Left colon (tissue), 2 donors: ENCODE measurements at regions of chr13 and their contacts with region 1.

Region 1: DNA sequence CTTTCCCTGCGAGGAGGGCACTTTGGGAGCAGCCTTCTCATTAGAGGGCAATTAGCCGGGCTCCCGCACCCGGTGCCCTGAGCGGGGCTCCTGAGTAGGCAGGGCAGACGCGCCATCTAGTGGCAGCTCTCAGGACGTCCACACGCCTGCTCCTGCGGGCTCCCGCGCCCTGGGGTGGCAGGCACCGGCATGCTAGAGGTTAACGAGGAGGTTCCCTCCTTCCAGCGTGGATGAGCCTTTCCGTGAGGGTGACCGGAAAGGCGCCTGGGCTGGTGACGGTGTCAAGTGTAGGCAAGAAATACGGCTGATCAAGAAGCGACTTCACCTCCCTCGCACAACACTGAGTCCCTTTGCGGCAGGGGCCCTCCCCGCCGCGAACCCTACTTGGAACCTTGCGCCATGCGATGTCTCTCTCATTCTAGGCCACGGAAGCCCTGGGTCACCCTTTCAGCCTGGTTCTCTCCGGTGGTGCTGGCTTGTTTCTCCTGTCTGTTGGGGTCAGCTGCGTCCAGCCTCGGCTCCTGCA is 67.7 kb downstream of the ALOX5AP start:
- DNase-seq: peak; percentile 83 to 91
- ATAC-seq: peak; percentile 97

Region 2: GRCh38 chr13:30132623-30133553 is 670.1 kb before region 1 on chr13:
- intact Hi-C with region 1: loop called in 1 of 2 experiments (anchors 10 kb)
- DNase-seq: peak; percentile 96 to 99
- ATAC-seq: peak; percentile 88

Region 3: DNA sequence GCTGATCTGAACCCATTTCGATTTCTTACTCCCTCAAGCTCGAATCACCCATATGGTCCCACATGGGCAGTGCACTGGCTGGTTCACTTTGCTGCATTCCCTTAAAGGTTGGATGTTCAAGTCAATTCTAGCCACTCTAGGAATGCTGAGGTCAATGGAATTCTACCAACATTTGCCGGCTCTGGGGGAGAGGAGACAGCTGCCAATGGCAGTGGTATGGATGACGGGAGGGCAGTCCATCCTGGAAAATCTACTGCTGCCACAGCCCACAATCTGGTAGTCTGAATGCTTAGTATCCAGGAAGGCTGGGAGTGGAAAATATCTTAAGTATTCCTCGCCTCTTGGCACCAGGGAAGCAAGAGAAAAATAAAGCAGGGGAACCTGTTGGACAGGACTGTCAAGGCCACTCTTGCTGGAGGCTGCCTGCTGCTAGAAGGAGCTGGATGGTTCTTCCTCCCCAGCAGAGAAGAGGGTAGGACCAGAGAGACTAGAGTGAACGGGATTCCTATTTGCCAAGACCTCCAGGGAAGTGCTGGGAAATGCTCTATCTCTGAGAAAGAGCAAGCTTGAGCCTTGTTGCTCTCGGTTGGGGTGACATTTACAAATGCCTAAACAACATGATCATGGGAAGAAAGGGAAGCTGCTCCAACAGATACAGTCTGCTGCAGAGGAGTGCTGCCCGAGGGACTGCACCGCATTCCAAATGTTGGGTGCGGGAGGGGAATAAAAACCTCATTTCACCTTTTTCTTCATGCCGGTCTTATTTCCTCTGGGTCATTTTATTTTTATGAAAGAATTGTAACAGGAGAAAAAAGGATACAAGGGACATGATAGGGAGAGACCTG is 316.6 kb before region 1 on chr13:
- intact Hi-C with region 1: loop called in 1 of 2 experiments (anchors 10 kb)
- DNase-seq: no peak
- ATAC-seq: peak; percentile 68

Region 4: DNA sequence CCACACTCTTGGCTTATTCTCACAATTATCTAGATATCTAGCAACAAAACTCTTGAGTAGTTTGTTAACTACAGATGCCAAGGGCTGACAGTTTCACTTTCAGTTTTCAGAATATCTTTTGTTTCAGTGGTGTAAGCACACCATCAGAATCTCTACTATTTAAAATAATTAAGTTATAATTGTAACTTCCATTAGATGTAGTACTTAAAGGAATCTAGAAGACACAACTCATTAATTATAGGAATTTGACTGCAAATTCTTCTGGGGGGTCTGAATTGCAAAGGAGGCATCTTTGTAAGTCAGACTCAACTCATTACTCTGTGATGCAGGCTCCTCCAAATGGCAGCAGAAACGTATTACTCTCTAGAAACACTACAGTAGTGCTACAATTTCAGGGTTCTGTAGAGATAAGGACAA is 230.1 kb before region 1 on chr13:
- intact Hi-C with region 1: no loop called
- DNase-seq: no peak
- ATAC-seq: peak; percentile 75

Region 5: DNA sequence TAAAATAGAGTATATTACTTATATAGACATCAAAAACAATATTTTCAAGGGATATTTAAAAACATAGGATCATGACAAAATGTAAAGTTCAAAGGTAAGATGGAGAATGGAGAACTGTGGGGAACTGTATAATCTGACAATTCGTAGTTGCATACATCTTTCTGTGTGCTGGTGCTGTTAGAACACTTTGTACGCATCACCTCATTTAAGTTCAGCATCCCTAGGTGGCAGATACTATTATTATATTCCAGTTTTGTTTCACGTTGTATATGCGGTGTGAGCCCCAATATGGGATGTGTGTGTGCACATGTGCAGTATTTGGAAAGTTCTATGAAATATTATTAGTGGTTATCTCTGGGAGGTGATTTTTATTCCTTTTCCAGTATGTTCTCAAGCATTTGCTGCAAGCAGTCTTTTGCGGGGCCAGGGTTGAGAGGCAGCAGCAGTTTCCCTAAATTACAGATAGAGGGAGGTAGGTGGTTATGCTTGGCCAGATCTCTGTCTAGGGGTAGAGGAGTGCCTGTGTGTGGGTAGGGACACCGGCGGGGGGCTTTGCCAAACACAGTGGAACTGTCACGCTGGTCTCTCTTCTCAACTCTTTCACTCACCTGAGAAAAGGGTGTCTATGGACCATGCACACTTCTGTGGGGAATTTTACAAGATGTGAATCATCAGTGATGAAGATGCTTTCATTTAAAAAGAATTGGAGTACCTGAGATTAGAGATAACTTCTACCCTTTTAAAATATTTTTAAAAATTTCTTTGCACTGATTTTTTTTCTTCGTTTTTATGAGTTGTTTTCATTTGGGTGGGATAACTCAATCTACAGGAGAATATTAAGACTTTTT is 123.3 kb before region 1 on chr13:
- intact Hi-C with region 1: loop called in 1 of 2 experiments (anchors 5 kb)
- DNase-seq: no peak
- ATAC-seq: peak; percentile 67

Region 6: DNA sequence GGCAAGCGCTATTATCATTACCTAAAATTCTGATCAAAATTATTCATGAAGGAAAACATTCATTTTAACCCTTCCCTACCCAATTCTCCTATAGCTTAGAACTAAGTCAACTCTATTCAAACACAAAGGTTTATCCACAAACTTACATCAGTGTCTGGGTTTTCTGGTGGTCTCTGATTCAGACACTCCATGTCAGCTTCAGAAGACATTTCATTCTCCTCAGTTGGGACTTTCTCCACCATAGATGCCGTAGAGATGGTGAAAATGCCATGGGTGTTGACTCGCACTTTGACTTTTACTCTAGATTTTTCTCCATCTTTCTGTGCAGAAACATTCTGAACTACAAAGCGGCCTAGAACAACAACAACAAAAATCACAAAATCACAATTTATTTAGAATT is 342.4 kb after region 1 on chr13:
- intact Hi-C with region 1: no loop called
- DNase-seq: no peak
- ATAC-seq: no peak